Psoas muscle (tissue), 8 donors: ENCODE measurements at regions of chr7 and their contacts with region 1.

Region 1: GRCh38 chr7:109154748-109155147 is 585.1 kb downstream of the DNAJB9 start:
- DNase-seq: no peak
- ATAC-seq: no peak
- H3K4me3 ChIP-seq: no peak overlapping the region
- H3K27ac ChIP-seq: no peak overlapping the region
- H3K4me1 ChIP-seq: no peaks in the 10 kb centered on the region
- H3K27me3 ChIP-seq: no peaks in the 10 kb centered on the region
- CTCF ChIP-seq: no peak

Region 2: DNA sequence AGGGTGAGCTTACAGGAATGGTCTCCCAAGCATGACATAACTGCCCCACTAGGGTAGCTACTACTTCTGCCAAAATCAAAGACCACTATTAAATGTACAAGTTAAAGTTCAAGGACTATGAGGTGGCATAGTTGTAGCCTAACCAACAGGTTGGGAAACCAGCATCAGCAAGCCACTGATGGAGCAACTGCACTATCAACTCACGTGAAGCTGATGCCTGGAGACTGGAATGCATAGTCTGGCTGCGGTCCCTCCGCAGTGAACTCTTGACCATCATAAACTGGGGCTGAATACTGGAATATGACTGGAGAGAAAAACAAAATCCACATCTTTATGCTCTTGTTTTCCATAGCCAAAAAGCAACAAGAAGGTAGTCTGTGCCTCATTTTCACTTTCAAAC is 43.7 kb before region 1 on chr7:
- intact Hi-C with region 1: loop called in 1 of 2 experiments (anchors 2 kb)
- DNase-seq: no peak
- ATAC-seq: no peak
- H3K4me3 ChIP-seq: no peak overlapping the region
- H3K27ac ChIP-seq: no peak overlapping the region
- H3K4me1 ChIP-seq: no peaks in the 10 kb centered on the region
- H3K27me3 ChIP-seq: no peaks in the 10 kb centered on the region
- CTCF ChIP-seq: no peak